Head of caudate nucleus (tissue), 42 donors: ENCODE measurements at regions of chr9 and their contacts with region 1.

Region 1: GRCh38 chr9:104927912-104928740 is at the start of gene ABCA1:
- DNase-seq: peak; percentile 88 to 98 (median 94)

Region 2: DNA sequence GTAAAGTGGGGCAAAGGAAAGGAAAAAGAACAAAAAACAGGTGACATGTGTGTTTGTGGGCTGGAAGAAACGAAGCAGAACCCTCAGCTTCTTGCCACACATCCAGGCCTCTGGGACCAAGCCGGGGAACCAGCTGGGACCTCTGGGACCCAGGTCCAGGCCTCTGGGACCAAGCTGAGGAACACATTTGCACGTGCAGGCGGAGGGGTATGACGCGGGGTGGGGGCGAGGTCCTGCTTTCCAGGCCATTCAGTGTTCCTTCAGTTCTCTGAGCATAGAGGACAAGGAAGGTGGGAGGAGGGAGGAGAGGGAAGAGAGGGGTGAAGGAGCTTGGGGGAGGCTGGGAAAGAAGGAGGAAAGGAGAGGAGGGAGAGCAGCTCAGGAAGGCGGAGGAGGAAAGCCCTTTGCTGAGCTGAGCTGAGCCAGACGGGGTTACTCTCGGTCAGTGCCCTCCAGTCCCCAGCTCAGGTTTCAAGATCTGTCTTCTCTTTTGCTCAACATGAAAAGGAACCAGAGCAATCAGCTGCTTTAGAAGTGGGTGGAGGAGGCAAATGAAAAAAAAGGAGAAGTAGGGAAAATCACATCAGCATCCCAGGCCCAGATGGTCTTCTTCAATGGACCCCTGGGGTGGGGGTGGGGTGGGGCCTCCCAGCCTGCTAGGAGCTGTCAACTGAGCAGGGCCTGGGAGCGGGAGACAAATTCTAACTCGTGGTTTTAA is 59.3 kb before region 1 on chr9:
- intact Hi-C with region 1: loop called (anchors 5 kb)
- DNase-seq: peak in 37 of 42 donors; percentile 6 to 76 (median 49)

Region 3: DNA sequence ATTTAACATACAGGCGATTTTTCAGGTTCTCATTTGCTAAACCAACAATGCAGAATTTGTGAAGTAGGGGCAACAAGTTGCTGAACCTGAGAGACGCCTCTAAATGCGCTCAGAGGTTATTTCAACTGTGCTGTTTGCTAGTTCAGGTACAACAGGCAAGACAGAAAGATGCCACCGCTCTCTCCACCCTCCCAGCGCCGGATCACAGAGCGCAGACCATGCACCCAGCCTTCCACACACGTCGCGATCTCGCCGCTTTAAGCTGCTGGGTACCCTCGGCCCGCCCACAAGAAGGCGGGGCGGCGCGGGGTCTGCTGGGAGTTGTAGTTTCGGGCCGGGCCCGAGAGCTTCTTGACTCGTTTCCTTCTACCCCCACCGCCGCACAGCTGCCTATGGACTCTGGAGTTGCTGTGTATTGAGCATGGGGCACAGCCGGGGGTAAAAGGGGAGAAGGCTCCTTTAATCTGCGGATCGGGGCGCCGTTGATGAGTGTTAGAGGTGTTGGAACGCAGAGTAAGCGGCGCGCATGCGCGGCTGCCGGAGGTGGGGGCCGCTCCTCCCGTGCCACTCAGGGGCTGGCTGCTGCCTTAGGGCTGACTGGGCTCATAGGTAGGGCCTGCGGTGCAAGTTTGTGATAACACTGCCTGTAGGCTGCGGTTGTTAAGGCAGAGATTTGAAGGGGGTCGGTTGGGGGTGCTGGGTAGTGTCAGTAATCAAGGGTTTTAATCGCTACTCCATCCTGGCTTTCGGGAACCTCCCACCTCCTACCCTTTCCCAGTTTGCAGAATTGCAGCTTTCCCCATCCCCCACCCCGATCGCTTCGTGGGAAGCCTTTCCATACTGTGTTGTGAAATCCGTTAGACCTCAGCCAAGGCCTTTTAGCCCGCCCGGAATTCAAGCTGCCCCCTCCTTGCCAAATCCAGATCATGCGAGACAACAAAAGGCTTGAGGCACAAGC is 40.2 kb after region 1 on chr9:
- intact Hi-C with region 1: loop called (anchors 1 kb)
- DNase-seq: peak; percentile 82 to 97 (median 93)

Region 4: GRCh38 chr9:104991144-104991953 is 63.2 kb after region 1 on chr9:
- intact Hi-C with region 1: loop called (anchors 10 kb)
- DNase-seq: peak; percentile 77 to 94 (median 89)

Region 5: GRCh38 chr9:105026451-105026850 is 98.3 kb after region 1 on chr9:
- intact Hi-C with region 1: no loop called
- DNase-seq: no peak

Region 6: DNA sequence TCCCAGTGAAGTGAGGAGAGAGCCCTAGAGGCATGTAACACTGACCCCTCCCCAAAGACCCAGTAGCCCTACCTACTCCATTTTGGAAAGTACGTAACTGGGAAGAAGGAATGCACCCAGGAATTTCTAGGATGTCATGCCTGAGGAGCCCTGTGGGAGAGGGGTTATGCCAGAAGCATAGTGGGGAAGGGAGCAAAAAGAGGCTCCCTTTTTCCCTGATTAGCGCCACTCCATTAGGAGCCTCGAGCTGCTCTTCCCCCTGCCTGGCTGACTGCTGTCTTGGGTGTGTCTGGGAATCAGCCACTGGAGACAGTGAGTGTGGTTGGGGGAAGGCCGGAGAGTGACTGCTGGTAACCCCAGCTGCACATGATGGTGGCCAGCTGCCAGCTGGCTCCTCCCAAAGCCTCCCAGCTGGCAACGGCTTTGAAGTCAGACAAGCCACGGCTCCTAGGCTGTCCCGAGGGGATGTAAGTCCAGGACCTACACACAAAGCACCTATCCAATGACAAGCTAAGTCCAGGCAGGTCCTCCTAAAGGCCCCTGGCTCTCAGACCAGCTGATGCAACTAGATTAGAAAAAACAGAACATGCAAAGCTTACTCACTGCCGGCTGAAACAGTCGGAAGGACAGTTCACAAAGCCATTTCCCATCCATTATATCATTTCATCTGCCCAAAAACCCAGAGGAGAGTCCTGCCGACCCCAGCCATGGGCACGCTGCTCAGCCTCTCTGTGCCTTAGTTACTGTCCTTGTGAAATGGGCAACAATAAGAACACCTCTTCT is 136.4 kb after region 1 on chr9:
- intact Hi-C with region 1: loop called (anchors 10 kb)
- DNase-seq: peak; percentile 74 to 94 (median 88)

Region 7: GRCh38 chr9:105157130-105157583 is 229.0 kb after region 1 on chr9:
- intact Hi-C with region 1: loop called (anchors 5 kb)
- DNase-seq: peak; percentile 33 to 81 (median 62)

Region 8: DNA sequence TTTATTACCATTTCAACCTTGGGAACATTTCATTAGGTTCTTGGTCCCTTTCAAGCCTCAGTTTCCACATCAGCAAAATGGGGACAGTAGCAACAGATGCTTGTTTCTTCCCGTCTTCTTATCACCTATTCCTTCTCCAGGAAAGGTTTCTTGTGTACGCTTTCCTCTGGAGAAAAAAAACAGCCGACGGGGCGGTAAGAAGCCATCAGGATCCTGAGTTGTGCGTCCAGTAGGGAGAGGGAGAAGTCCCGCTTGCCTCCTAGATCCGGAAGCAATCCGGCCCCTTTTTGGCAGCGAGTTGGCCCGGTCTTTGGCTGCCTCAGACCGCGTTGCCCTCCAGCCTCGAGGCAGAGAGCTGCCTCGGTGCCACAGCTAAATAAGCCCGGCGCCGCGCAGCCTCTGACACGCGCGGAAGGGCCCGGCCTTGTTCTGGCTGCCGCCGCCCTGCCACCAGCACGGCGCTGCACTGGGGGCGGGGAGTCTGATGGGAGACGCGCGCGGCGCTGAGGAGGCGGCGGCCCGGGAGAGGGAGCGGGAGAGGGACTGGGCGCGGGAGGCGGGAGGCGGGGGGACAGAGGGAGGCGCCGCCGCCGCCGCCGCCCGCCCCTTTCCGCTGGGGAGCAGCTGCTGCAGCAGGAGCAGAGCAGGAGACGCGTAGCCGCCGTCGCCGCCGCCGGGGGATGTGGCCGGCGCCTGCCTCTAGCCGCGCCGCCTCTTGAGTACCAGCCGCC is 316.0 kb after region 1 on chr9 and contains the start of gene SLC44A1:
- intact Hi-C with region 1: loop called (anchors 10 kb)
- DNase-seq: peak; percentile 93 to 100 (median 99)

Region 9: GRCh38 chr9:105341434-105342144 is 413.5 kb after region 1 on chr9:
- intact Hi-C with region 1: no loop called
- DNase-seq: no peak